Activated CD4-positive, alpha-beta T cell treated with anti-CD3 and anti-CD28 coated beads, Interleukin-2, amount 10 ng/mL, durations not matched to agents 24 days and 14 days (primary cell): ENCODE measurements at regions of chr5 and their contacts with region 1.

Region 1: GRCh38 chr5:157026789-157027424 is 32.0 kb downstream of the HAVCR1 start:
- DNase-seq: peak; percentile 71
- H3K4me3 Mint-ChIP-seq: peak overlapping the region; percentile 26
- H3K27ac Mint-ChIP-seq: peak overlapping the region; percentile 91
- H3K4me1 Mint-ChIP-seq: peaks cover 81% of the 10 kb centered on the region
- H3K27me3 Mint-ChIP-seq: peaks cover 2% of the 10 kb centered on the region

Region 2: DNA sequence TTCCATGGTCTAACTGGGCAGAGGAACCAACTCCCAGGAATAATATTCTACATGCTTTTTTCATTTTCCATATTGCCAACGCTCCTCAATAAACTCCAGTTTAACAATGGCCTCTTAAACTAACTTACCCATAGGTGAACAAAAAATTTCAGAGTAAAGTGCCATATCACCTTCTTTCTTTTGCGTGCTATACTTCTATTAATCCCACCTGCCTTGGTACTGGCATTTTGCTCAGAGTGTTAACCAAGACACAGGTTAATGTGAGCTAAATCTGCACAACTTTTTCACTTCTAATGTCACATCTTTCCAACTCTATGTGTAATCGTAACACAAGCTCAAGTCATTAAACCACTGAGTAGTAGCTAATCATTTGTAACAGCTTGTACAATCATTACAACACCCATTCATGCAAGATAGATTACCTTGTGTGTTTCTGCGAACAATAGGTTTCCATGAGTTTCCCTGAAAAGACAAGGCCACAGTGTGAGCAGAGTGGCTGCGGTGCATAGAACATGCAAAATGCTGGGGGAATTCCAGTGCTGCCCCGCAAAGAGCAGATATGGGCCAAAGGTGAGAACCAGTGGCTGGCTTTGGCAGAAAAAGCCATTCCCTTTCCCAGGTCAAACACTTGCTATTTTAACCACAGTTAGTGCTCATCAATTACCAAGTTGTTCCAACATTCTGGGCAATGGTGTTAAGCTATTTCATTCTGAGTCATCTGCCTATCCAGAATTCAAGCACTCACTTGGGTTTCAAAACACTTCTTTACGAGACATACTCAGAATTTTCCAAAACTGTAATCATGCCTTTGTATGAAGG is 106.7 kb before region 1 on chr5:
- intact Hi-C with region 1: loop called (anchors 1 kb)
- DNase-seq: peak; percentile 90
- H3K4me3 Mint-ChIP-seq: peak overlapping the region; percentile 87
- H3K27ac Mint-ChIP-seq: peak overlapping the region; percentile 96
- H3K4me1 Mint-ChIP-seq: peaks cover 61% of the 10 kb centered on the region
- H3K27me3 Mint-ChIP-seq: no peaks in the 10 kb centered on the region

Region 3: GRCh38 chr5:157046041-157046440 is 19.1 kb after region 1 on chr5:
- intact Hi-C with region 1: no loop called
- DNase-seq: no peak
- H3K4me3 Mint-ChIP-seq: no peak overlapping the region
- H3K27ac Mint-ChIP-seq: peak overlapping the region; percentile 48
- H3K4me1 Mint-ChIP-seq: peaks cover 36% of the 10 kb centered on the region
- H3K27me3 Mint-ChIP-seq: no peaks in the 10 kb centered on the region

Region 4: GRCh38 chr5:157076558-157076957 is 49.7 kb after region 1 on chr5:
- intact Hi-C with region 1: loop called (anchors 1 kb)
- DNase-seq: peak; percentile 62
- H3K4me3 Mint-ChIP-seq: no peak overlapping the region
- H3K27ac Mint-ChIP-seq: peak overlapping the region; percentile 59
- H3K4me1 Mint-ChIP-seq: peaks cover 45% of the 10 kb centered on the region
- H3K27me3 Mint-ChIP-seq: no peaks in the 10 kb centered on the region

Region 5: GRCh38 chr5:157130925-157131324 is 104.0 kb after region 1 on chr5:
- intact Hi-C with region 1: loop called (anchors 2 kb)
- DNase-seq: peak; percentile 53
- H3K4me3 Mint-ChIP-seq: no peak overlapping the region
- H3K27ac Mint-ChIP-seq: no peak overlapping the region
- H3K4me1 Mint-ChIP-seq: peaks cover 35% of the 10 kb centered on the region
- H3K27me3 Mint-ChIP-seq: no peaks in the 10 kb centered on the region

Region 6: DNA sequence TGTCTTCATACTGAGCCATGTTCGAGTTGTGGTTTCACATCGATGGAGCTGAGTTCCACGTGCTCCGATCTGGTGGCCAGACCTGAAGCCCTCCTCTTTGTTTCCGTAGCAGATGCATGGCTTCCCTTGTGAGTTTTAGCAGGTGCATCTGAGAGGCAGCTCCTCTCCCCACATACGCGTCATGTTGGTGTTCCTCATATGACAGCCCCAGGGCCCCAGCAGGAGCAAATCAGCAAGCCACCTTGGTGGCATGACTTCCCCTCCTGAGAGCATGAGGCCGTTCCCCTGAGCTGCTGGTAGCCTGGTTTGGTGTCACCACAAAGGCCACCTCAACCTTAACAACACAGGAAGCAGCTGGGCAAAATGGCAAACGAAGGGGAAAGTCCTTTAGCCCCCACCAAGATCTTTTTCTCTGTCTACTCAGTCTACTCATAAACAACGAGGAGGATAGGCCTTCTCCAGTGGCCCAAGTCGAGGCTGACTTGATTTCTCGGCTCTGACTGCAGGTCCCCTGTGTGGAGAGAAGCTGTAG is 244.9 kb after region 1 on chr5:
- intact Hi-C with region 1: loop called (anchors 5 kb)
- DNase-seq: peak; percentile 95
- H3K4me3 Mint-ChIP-seq: peak overlapping the region; percentile 96
- H3K27ac Mint-ChIP-seq: peak overlapping the region; percentile 99
- H3K4me1 Mint-ChIP-seq: peaks cover 81% of the 10 kb centered on the region
- H3K27me3 Mint-ChIP-seq: no peaks in the 10 kb centered on the region

Region 7: DNA sequence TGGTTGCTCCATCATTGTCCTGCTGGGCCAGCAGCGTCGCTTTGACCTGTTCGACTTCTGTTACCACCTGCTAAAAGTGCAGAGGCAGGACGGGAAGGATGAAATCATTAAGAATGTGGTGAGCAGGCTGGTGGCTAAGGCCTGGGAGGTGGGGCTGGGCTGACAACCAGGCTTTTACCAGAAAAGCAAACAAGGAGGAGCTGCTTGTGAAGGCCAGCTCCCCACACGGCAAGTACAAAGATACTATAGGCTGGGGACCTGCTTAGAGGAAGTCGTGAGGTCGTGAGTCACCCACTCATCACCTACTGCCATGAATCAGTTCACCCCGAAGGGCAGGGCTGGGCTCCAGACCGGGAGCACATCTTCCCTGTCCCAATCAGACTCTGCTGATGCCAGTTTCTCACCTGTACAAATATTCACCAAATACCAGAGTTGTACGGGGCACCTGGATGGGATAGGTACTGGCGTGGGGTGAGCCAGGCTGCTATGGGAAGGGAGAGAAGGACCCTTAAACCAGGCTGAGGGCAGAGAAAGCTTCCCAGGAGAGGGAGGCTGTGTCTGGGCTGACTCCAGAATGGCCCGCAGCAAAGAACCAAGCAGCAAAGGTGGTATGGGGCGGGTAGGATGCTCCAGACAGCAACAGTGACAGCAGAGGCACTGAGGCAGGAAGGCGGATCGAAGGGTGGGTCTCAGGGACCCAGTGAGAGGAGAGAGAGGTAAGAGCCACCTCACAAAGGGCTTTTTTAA is 363.8 kb after region 1 on chr5:
- intact Hi-C with region 1: no loop called
- DNase-seq: peak; percentile 82
- H3K4me3 Mint-ChIP-seq: peak overlapping the region; percentile 58
- H3K27ac Mint-ChIP-seq: peak overlapping the region; percentile 95
- H3K4me1 Mint-ChIP-seq: peaks cover 24% of the 10 kb centered on the region
- H3K27me3 Mint-ChIP-seq: no peaks in the 10 kb centered on the region